ENCODE measurements at regions of chr1 and their contacts with region 1.

Region 1: DNA sequence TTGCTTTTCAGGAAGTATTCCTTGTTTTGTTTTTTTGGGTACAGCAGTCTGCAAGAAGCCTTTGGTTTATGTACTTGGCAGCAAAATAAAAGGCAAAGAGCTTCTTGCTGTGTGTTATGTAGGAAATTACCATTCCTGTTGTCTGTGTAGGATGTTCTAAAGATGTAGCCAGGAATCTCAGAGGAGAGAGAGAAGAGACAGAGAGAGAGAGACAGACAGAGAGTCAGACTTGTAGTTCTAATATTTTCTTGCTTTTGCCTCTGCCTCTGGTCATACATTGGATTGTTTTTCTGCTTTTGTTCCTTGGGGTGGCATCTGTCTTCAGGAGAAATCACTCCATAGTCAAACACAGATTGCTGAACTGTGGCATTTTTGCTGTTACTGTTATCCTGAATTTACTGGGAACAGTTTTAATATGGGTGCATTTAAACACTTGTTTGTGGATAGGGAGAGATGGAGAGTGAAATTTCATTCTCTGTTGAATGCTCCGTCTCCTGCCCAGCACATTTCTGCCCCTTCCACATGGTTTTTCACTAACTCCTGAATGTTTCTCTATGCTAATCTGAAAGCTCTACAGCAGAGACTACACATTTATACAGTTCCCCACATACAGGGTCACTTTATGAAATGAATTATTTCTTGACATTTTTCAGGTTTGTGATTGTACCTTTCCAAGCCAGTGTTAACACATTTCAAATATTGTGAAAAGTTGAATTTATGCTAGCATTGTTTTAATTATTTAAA is 49.8 kb downstream of the POU2F1 start:
- DNase-seq: no peak
- ATAC-seq: no peak
- H3K4me3 Mint-ChIP-seq: no peak overlapping the region
- H3K27ac Mint-ChIP-seq: no peak overlapping the region
- H3K4me1 Mint-ChIP-seq: peaks cover 20% of the 10 kb centered on the region
- H3K27me3 Mint-ChIP-seq: no peaks in the 10 kb centered on the region

Region 2: GRCh38 chr1:167092653-167093052 is 177.9 kb before region 1 on chr1:
- CTCF ChIA-PET with region 1: no interaction called
- POLR2A ChIA-PET with region 1: no interaction called
- DNase-seq: no peak
- ATAC-seq: no peak
- H3K4me3 Mint-ChIP-seq: no peak overlapping the region
- H3K27ac Mint-ChIP-seq: no peak overlapping the region
- H3K4me1 Mint-ChIP-seq: peaks cover 14% of the 10 kb centered on the region
- H3K27me3 Mint-ChIP-seq: peaks cover 2% of the 10 kb centered on the region

Region 3: DNA sequence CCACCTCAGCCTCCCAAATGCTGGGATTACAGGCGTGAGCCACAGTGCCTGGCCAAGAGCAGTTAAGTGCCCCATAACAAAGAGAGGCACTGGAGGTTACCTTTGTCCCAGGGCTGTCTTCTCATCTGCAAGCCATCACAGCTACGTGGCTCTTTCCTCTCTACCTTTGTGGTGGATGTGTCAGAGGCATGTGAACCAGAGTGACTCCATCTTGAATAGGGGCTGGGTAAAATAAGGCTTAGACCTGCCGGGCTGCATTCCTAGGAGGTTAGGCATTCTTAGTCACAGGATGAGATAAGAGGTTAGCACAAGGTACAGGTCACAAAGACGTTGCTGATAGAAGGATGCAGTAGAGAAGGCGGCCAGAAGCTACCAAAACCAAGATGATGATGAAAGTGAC is 109.3 kb before region 1 on chr1:
- CTCF ChIA-PET with region 1: no interaction called
- POLR2A ChIA-PET with region 1: no interaction called
- DNase-seq: no peak
- ATAC-seq: no peak
- H3K4me3 Mint-ChIP-seq: no peak overlapping the region
- H3K27ac Mint-ChIP-seq: no peak overlapping the region
- H3K4me1 Mint-ChIP-seq: peaks cover 9% of the 10 kb centered on the region
- H3K27me3 Mint-ChIP-seq: peaks cover 9% of the 10 kb centered on the region

Region 4: GRCh38 chr1:167220537-167221125 is 49.9 kb before region 1 on chr1 and contains the start of gene POU2F1:
- CTCF ChIA-PET with region 1: interaction called, 32 read pairs
- POLR2A ChIA-PET with region 1: interaction called, 4 read pairs
- DNase-seq: peak; percentile 99
- ATAC-seq: peak; percentile 87
- H3K4me3 Mint-ChIP-seq: peak within 1 kb of the TSS; percentile 91
- H3K27ac Mint-ChIP-seq: peak within 1 kb of the TSS; percentile 95
- H3K4me1 Mint-ChIP-seq: peaks cover 30% of the 10 kb centered on the region
- H3K27me3 Mint-ChIP-seq: no peaks in the 10 kb centered on the region
- total RNA-seq, gene POU2F1: 22.7 to 23.3 TPM

Region 5: DNA sequence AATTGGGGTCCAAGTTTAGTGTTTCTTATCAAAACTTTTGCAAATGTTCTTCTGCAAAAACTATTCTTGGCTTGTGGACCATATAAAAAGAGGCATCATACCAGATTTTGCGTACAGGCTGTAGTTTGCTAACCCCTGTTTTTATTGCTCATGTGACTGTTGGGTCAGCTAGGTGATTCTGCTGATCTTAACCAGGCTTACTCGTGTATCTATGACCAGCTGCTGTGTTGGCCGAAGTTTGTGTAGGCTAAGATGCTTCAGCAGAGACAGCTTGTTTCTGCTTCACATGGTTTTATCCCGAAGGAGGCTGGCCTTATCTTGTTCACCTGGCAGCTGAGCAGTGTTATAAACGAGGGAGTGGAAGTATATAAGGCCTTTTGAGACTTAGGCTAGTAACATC is 11.7 kb before region 1 on chr1:
- CTCF ChIA-PET with region 1: interaction called, 22 read pairs
- POLR2A ChIA-PET with region 1: no interaction called
- DNase-seq: no peak
- ATAC-seq: no peak
- H3K4me3 Mint-ChIP-seq: no peak overlapping the region
- H3K27ac Mint-ChIP-seq: no peak overlapping the region
- H3K4me1 Mint-ChIP-seq: peaks cover 8% of the 10 kb centered on the region
- H3K27me3 Mint-ChIP-seq: no peaks in the 10 kb centered on the region

Region 6: GRCh38 chr1:167297222-167298214 is 27.0 kb after region 1 on chr1:
- CTCF ChIA-PET with region 1: interaction called, 11 read pairs
- POLR2A ChIA-PET with region 1: no interaction called
- DNase-seq: no peak
- ATAC-seq: no peak
- H3K4me3 Mint-ChIP-seq: no peak overlapping the region
- H3K27ac Mint-ChIP-seq: no peak overlapping the region
- H3K4me1 Mint-ChIP-seq: peaks cover 8% of the 10 kb centered on the region
- H3K27me3 Mint-ChIP-seq: no peaks in the 10 kb centered on the region

Region 7: GRCh38 chr1:167342846-167343245 is 72.3 kb after region 1 on chr1:
- CTCF ChIA-PET with region 1: interaction called, 16 read pairs
- POLR2A ChIA-PET with region 1: no interaction called
- DNase-seq: no peak
- ATAC-seq: peak; percentile 33
- H3K4me3 Mint-ChIP-seq: no peak overlapping the region
- H3K27ac Mint-ChIP-seq: no peak overlapping the region
- H3K4me1 Mint-ChIP-seq: peaks cover 3% of the 10 kb centered on the region
- H3K27me3 Mint-ChIP-seq: no peaks in the 10 kb centered on the region

Region 8: GRCh38 chr1:167442124-167442848 is 171.8 kb after region 1 on chr1:
- CTCF ChIA-PET with region 1: interaction called, 23 read pairs
- POLR2A ChIA-PET with region 1: no interaction called
- DNase-seq: peak; percentile 91
- ATAC-seq: peak; percentile 85
- H3K4me3 Mint-ChIP-seq: no peak overlapping the region
- H3K27ac Mint-ChIP-seq: peak overlapping the region; percentile 81
- H3K4me1 Mint-ChIP-seq: peaks cover 94% of the 10 kb centered on the region
- H3K27me3 Mint-ChIP-seq: no peaks in the 10 kb centered on the region

Region 9: DNA sequence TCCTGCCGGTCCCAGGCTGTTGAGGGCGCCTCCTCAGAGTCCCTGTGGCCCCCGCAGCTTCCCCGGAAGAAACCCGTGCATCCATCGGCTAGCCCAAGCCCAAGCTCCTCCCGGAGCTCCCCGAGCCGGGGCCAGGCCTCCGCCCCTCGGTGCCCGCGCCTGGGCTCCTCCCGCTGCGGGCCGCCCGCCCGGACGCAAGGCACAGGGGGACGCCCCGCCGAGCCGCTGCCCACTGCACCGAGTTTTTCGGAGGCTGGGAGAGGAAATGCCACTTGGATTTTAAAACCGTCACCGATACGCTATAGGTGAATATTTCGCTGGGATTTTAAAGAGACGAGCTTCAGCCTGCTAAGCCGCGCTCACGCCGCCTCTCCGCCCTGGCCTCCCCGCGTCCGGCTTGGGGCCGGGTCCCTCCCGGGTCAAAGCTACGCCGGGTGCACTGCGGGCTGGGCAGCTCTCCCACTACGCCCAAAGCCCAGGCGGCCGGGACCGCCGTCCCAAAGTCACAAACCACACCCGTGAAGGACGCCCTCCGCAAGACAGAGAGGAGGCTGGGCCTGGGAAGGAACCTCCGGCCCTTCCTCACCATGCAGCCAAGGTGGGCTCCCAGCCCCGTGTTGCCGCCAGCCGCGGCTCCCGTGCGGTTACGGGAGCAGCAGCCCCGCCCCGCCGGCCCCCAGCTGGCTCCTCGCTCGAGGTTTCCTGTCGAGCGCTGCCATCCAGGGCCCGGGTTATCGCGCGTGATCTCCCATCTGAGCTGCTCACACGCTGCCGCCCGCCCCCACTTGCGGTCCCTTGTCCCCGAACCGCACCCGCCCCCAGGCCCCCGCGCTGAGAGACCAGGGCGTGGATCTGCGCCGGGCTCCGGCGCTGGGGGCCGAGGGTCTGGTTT is 184.6 kb after region 1 on chr1:
- CTCF ChIA-PET with region 1: interaction called, 22 read pairs
- POLR2A ChIA-PET with region 1: no interaction called
- DNase-seq: peak; percentile 88
- ATAC-seq: peak; percentile 70
- H3K4me3 Mint-ChIP-seq: peak overlapping the region; percentile 78
- H3K27ac Mint-ChIP-seq: peak overlapping the region; percentile 81
- H3K4me1 Mint-ChIP-seq: peaks cover 75% of the 10 kb centered on the region
- H3K27me3 Mint-ChIP-seq: no peaks in the 10 kb centered on the region